AG04449 (cell line): ENCODE measurements at regions of chr11 and their contacts with region 1.

Region 1: DNA sequence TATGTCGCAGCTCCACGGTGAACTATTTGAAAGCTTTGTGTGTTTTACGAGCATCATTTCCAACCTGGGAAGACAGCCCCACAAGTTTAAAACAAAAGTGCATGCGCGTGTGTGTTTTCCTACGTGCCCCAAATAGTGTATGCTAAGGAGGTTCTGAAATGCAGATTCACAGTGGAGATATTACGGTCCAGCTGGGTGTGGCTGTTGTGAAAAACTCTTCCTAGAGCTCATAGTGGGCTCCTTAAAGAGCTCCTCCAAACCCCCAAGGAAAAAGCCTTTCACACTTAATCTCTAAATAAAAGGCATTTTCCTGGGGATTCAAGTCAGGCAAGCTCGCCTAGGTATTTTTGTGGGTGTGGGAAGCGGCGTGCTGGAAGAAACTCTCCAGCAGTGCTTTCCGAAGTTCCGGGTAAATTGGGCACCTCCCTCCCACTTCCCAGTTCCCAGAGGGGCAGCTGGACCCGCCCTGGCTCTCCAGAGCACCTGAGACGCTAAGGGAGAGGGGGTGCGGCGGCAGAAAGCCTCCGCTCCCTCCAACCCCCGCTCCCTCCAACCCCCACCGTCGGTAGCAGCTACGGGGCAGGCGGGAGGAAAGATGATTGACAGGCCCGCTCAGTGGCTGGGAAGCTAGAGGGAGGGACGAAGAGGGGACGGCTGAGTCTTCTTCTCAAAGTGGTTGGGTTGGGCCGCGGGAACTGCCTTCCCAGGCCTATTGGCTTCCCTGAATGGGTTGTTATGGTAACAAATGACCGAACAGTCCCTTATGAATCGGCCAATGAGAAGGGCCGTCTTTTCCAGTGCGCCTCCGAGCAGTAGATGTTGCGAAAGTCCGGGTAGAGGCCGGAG is 558 bp upstream of the PCF11 start:
- DNase-seq: peak; percentile 99
- H3K4me3 ChIP-seq: peak overlapping the region; percentile 73
- CTCF ChIP-seq: no peak

Region 2: DNA sequence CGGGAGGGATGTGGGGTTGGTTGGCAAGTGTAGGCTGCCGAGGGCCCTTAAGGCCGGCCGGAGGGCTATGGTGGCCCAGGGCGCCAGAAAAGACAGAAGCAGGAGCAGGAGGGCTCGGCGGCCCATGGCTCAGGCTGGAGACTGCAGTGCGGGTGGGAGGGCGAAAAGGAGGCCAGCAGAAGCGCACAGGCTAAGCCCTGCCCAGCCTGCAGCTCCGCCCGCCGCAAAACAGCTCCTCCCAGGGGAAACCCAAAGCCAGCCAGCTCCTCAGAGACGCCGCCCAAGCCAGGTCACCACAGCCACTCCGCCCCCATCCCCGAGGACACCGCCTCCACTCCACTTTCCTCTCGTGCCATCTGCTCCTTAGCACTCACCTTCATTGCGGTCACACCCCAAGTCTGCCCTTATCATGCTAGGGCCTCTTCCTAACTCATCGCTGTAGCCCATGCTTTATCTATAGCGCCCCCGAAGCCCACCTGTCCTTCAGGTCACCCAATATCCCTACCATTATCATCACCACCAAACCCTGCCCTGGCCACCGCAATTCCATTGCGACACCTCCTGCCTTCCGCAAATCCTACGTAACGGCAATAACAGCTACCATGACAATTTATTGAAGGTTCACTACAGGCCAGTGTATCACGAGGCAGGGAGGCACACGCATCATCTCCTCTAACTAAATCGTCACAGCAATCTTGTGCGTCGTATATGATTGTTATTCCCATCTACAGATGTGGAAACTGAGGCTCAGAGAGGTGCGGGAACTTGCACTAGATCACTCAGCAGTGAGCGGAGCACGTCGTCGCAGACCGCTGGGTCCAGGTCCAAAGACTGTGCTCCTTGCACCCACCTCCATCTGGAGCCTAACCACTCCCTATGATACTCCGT is 255.9 kb before region 1 on chr11 and contains the start of gene PRCP:
- CTCF ChIA-PET with region 1: no interaction called
- POLR2A ChIA-PET with region 1: interaction called, 18 read pairs
- DNase-seq: peak; percentile 31
- H3K4me3 ChIP-seq: peak within 1 kb of the TSS; percentile 86
- CTCF ChIP-seq: no peak

Region 3: DNA sequence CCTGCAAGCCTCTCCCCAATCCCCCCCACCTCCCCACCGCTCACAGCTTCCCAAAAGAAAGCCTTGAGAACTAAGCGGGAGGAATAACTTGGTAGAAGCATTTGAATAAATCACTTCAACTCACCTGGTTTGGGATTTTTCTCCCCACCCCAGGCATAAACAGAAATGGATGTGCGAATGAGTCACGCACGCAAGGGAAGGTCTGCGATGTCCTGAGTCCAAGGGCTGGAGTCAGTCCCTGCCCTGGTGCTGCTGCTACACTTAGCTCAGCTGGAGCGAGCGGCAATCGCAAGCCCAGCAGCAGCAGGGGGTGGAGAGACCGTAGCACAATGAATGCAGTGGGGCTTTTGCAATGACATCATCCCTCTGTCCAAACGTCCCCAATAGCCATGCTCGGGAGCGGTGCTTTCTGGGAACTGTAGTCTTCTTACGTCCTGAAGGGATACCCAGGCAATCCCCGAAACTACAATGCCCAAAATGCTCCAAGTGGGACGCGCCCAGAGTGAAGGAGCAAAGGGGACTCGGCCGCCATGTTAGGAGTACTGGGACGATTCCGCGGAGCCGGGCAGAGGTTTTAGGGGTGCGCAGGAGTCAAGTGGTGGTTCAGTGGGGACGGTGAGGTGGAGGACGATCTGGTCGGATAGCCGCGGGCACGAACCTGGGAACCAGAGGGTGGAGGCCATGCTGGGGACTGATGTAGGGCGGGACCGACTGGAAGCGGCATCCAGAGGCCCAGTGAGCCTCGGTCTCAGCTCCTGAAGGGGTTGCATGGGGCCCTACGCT is 84.6 kb before region 1 on chr11 and contains the start of gene RAB30:
- CTCF ChIA-PET with region 1: no interaction called
- POLR2A ChIA-PET with region 1: interaction called, 11 read pairs
- DNase-seq: peak; percentile 99
- H3K4me3 ChIP-seq: peak within 1 kb of the TSS; percentile 96
- CTCF ChIP-seq: no peak

Region 4: GRCh38 chr11:83115551-83115950 is 40.8 kb before region 1 on chr11:
- CTCF ChIA-PET with region 1: no interaction called
- POLR2A ChIA-PET with region 1: no interaction called
- DNase-seq: no peak
- H3K4me3 ChIP-seq: no peak overlapping the region
- CTCF ChIP-seq: no peak